Activated B cell treated with CpG ODN at 0.5 μM for 24 hours (primary cell): ENCODE measurements at regions of chr1 and their contacts with region 1.

Region 1: GRCh38 chr1:64686828-64687724 is 57.8 kb upstream of the RAVER2 start:
- DNase-seq: no peak
- ATAC-seq: peak; percentile 64
- H3K4me3 Mint-ChIP-seq: no peak overlapping the region
- H3K27ac Mint-ChIP-seq: no peak overlapping the region
- H3K4me1 Mint-ChIP-seq: no peaks in the 10 kb centered on the region
- H3K27me3 Mint-ChIP-seq: no peaks in the 10 kb centered on the region
- CTCF ChIP-seq: peak; percentile 67

Region 2: GRCh38 chr1:65036545-65037180 is 349.6 kb after region 1 on chr1:
- CTCF ChIA-PET with region 1: no interaction called
- POLR2A ChIA-PET with region 1: no interaction called
- intact Hi-C with region 1: loop called (anchors 1 kb)
- DNase-seq: no peak
- ATAC-seq: no peak
- H3K4me3 Mint-ChIP-seq: no peak overlapping the region
- H3K27ac Mint-ChIP-seq: no peak overlapping the region
- H3K4me1 Mint-ChIP-seq: peaks cover 11% of the 10 kb centered on the region
- H3K27me3 Mint-ChIP-seq: no peaks in the 10 kb centered on the region
- CTCF ChIP-seq: no peak

Region 3: DNA sequence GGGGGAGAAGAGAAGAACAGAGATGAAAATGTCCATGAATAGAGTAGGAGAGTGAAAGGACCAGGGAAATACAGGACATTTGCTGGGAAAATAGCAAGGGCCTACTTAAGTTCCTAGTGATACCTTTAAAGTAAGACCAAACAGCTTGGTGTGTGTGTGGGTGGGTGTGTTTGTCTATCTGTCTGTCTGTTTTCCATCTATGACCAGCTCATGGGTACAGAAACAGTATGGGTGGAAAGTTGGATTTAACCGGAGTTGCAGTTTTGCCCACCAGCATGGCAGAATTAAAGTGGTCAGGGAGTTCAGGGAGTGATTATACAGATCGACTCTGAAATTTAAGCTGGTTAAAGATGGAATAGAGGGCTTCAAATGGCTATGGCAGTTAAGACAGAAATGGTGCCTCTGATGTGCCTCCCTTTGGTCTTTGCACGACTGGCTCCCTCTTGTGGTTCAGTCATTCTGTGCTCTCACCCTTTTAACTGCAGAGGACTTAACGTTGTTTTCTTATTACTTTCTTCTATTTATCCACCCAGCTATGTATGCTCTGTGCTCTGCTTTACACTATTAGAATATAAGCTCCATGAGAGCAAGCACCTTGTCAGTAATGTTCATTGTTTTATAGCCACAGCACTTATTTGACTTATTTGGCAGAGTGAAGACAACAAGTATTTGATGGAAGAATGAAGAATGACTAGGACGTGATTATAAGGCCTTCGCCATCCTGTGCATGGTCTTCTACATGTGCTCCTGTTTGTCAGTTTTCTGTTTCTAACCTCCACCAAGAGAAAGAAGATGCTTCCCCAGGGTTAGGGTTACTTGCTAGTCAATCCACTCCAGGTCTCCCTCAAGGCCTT is 388.3 kb after region 1 on chr1:
- CTCF ChIA-PET with region 1: interaction called, 3 read pairs
- POLR2A ChIA-PET with region 1: no interaction called
- intact Hi-C with region 1: loop called (anchors 1 kb)
- DNase-seq: no peak
- ATAC-seq: peak; percentile 94
- H3K4me3 Mint-ChIP-seq: no peak overlapping the region
- H3K27ac Mint-ChIP-seq: no peak overlapping the region
- H3K4me1 Mint-ChIP-seq: no peaks in the 10 kb centered on the region
- H3K27me3 Mint-ChIP-seq: peaks cover 5% of the 10 kb centered on the region
- CTCF ChIP-seq: peak; percentile 51